Dorsolateral prefrontal cortex (tissue), 120 donors: ENCODE measurements at regions of chrX and their contacts with region 1.

Region 1: DNA sequence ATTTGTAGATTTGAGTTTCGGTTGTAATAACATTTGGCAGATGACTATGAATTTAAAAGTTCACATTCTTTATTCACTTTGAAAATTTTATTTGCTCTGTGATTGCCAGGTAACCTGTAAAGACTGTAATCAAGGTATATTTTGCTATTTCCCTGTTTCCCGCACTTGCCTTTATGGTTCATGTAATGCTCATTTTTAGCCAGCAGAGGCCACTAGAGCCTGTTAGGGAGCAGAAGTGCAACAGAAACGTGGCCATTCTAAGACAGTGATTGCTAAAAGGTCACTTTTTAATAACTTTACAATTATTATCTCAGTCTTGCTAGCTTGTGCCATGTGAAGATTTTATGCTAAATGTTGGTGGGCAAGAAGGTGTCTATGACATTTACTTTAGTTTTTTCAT is 12.4 kb downstream of the YIPF6 start:
- DNase-seq: peak in 1 of 10 donors; percentile 9
- H3K4me3 ChIP-seq: no peak overlapping the region
- H3K27ac ChIP-seq: no peak overlapping the region
- H3K27me3 ChIP-seq: peaks cover 0 to 34% (median 5%) of the 10 kb centered on the region in 45 donors
- CTCF ChIP-seq: peak in 55 of 56 donors; percentile 47 to 83 (median 67)

Region 2: GRCh38 chrX:68365341-68365740 is 145.9 kb before region 1 on chrX:
- intact Hi-C with region 1: no loop called
- DNase-seq: no peak
- H3K4me3 ChIP-seq: no peak overlapping the region
- H3K27ac ChIP-seq: no peak overlapping the region
- H3K27me3 ChIP-seq: peaks cover 0 to 38% (median 4%) of the 10 kb centered on the region in 45 donors
- CTCF ChIP-seq: no peak

Region 3: GRCh38 chrX:68644861-68645260 is 133.6 kb after region 1 on chrX:
- intact Hi-C with region 1: no loop called
- DNase-seq: no peak
- H3K4me3 ChIP-seq: no peak overlapping the region
- H3K27ac ChIP-seq: no peak overlapping the region
- H3K27me3 ChIP-seq: peaks cover 0 to 80% (median 36%) of the 10 kb centered on the region in 45 donors
- CTCF ChIP-seq: no peak

Region 4: DNA sequence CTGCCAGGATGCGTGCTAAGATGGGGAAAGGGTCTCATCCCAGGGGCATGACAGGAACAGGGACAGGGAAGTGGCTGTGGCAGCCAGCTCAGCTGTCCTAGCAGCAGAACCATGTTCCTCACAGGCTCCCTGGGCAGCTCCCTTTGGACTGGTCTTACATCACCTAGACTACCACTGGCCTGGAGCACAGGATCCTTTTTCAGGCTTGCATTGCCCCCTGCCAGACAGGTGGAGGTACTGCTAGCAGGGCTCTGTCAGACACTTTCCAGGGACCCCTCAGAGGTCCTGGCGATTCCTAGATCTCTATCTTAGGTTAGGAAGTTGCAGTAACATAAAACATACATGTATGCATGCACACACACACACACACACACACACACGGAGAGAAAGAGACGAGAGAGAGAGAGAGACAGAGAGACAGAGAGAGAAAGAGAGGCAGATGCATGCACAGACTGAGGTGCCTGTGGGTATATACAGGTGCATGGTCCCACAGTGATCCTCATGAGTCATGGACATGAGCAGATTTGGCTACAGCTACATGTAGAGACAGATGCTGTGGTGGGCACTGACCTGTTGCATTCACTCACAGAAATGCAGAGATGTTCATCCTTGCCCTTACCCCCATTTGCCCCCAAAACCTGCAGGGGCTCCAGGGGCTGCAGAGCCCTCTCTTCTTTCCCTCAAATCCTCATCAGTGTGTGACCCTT is 199.8 kb after region 1 on chrX:
- intact Hi-C with region 1: loop called in 1 of 2 experiments (anchors 10 kb)
- DNase-seq: no peak
- H3K4me3 ChIP-seq: no peak overlapping the region
- H3K27ac ChIP-seq: no peak overlapping the region
- H3K27me3 ChIP-seq: peaks cover 0 to 74% (median 6%) of the 10 kb centered on the region in 45 donors
- CTCF ChIP-seq: peak in 31 of 56 donors; percentile 9 to 52 (median 25)

Region 5: GRCh38 chrX:68784816-68785215 is 273.6 kb after region 1 on chrX:
- intact Hi-C with region 1: no loop called
- DNase-seq: no peak
- H3K4me3 ChIP-seq: no peak overlapping the region
- H3K27ac ChIP-seq: no peak overlapping the region
- H3K27me3 ChIP-seq: peaks cover 0 to 27% (median 11%) of the 10 kb centered on the region in 45 donors
- CTCF ChIP-seq: no peak

Region 6: GRCh38 chrX:69093960-69094871 is 583.0 kb after region 1 on chrX:
- intact Hi-C with region 1: loop called in 1 of 2 experiments (anchors 10 kb)
- DNase-seq: peak in 5 of 10 donors; percentile 14 to 64 (median 38)
- H3K4me3 ChIP-seq: no peak overlapping the region
- H3K27ac ChIP-seq: no peak overlapping the region
- H3K27me3 ChIP-seq: peaks cover 0 to 52% (median 8%) of the 10 kb centered on the region in 45 donors
- CTCF ChIP-seq: peak in 55 of 56 donors; percentile 22 to 71 (median 58)

Region 7: DNA sequence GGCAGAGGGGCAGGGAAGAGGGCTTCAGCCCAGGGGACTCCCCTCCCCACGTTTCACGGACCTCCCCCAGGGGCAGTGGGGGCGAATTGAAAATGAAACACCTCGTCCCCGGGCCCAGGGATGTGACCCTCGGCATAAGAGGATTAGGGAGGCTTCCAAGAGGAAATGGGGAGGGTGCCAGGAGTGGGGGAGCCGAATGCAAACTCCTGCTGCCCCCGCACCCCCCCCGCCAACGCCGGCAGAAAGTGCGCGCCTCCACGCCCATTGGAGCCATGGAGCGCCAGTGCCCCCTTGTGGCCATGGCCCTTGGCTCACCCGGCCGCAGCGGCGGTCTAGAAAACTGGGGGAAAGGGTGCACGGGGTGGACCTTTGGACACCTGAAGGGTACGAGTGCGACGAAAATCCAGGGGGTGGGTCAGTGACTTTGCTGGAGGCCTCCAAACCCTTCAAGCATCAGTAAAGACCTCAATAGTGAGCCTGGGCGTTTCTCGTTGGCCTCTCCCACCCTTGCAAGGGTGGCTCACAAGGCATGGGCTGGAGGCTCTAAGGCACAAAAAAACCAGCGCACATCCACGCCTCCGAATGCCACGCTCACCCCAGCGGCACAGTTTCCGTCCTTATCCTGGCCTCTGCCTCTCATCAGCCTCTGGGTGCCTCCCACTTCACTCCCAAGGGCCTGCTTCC is 774.8 kb after region 1 on chrX:
- intact Hi-C with region 1: loop called in 1 of 2 experiments (anchors 5 kb)
- DNase-seq: peak in 8 of 10 donors; percentile 23 to 62 (median 52)
- H3K4me3 ChIP-seq: peak overlapping the region in 57 of 59 donors; percentile 9 to 66 (median 47)
- H3K27ac ChIP-seq: no peak overlapping the region
- H3K27me3 ChIP-seq: peaks cover 0 to 85% (median 17%) of the 10 kb centered on the region in 45 donors
- CTCF ChIP-seq: peak; percentile 36 to 90 (median 82)